CD4-positive, alpha-beta memory T cell (primary cell): ENCODE measurements at regions of chr12 and their contacts with region 1.

Region 1: GRCh38 chr12:53231826-53232645 is at the start of gene RARG:
- DNase-seq: peak; percentile 64 to 83 (median 67)
- H3K4me3 ChIP-seq: peak within 1 kb of the TSS; percentile 63 to 90
- H3K4me3 Mint-ChIP-seq: peak within 1 kb of the TSS; percentile 87 to 98 (median 93)
- H3K27ac ChIP-seq: peak within 1 kb of the TSS; percentile 71
- H3K27ac Mint-ChIP-seq: peak within 1 kb of the TSS; percentile 89 to 98 (median 95)
- H3K4me1 ChIP-seq: peaks cover 92% of the 10 kb centered on the region
- H3K4me1 Mint-ChIP-seq: peaks cover 55 to 89% (median 74%) of the 10 kb centered on the region in 4 donors
- H3K27me3 ChIP-seq: no peaks in the 10 kb centered on the region
- H3K27me3 Mint-ChIP-seq: no peaks in the 10 kb centered on the region
- total RNA-seq, gene RARG: 84.7 to 86.0 TPM

Region 2: DNA sequence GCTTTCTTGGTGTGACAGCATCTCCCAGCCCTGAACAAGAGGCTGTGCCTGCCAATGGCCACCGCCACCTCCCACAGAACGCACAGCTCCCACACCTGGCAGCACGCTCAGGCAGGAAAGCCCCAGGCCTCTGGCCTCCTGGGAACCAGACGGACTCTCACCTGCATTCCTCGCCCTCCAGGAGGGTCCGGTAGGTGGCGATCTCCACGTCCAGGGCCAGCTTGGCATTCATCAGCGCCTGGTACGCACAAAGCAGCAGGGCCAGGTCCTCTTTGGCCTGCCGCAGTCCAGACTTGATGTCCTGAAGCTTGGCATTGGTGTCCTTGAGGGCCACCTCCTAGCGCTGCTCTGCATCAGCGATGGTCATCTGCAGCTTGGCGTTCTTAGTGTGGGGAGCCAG is 516.6 kb before region 1 on chr12:
- CTCF ChIA-PET with region 1: no interaction called
- POLR2A ChIA-PET with region 1: no interaction called
- intact Hi-C with region 1: no loop called
- DNase-seq: no peak
- H3K4me3 ChIP-seq: no peak overlapping the region
- H3K4me3 Mint-ChIP-seq: peak overlapping the region in 2 of 8 donors; percentile 46 to 66
- H3K27ac ChIP-seq: no peak overlapping the region
- H3K27ac Mint-ChIP-seq: no peak overlapping the region
- H3K4me1 ChIP-seq: peaks cover 7% of the 10 kb centered on the region
- H3K4me1 Mint-ChIP-seq: peaks cover 3 to 14% (median 9%) of the 10 kb centered on the region in 4 donors
- H3K27me3 ChIP-seq: peaks cover 26% of the 10 kb centered on the region
- H3K27me3 Mint-ChIP-seq: peaks cover 30 to 34% of the 10 kb centered on the region in 2 donors

Region 3: GRCh38 chr12:53267999-53268647 is 36.1 kb after region 1 on chr12 and contains the start of gene ESPL1:
- CTCF ChIA-PET with region 1: interaction called, 3 read pairs
- POLR2A ChIA-PET with region 1: interaction called, 13 read pairs
- intact Hi-C with region 1: no loop called
- DNase-seq: peak; percentile 78 to 82 (median 81)
- H3K4me3 ChIP-seq: peak within 1 kb of the TSS; percentile 76 to 91
- H3K4me3 Mint-ChIP-seq: peak within 1 kb of the TSS; percentile 93 to 100 (median 96)
- H3K27ac ChIP-seq: peak within 1 kb of the TSS; percentile 71
- H3K27ac Mint-ChIP-seq: peak within 1 kb of the TSS; percentile 92 to 97 (median 95)
- H3K4me1 ChIP-seq: peaks cover 10% of the 10 kb centered on the region
- H3K4me1 Mint-ChIP-seq: peaks cover 11 to 29% (median 19%) of the 10 kb centered on the region in 4 donors
- H3K27me3 ChIP-seq: no peaks in the 10 kb centered on the region
- H3K27me3 Mint-ChIP-seq: no peaks in the 10 kb centered on the region
- total RNA-seq, gene ESPL1: 0.20 to 0.55 TPM

Region 4: DNA sequence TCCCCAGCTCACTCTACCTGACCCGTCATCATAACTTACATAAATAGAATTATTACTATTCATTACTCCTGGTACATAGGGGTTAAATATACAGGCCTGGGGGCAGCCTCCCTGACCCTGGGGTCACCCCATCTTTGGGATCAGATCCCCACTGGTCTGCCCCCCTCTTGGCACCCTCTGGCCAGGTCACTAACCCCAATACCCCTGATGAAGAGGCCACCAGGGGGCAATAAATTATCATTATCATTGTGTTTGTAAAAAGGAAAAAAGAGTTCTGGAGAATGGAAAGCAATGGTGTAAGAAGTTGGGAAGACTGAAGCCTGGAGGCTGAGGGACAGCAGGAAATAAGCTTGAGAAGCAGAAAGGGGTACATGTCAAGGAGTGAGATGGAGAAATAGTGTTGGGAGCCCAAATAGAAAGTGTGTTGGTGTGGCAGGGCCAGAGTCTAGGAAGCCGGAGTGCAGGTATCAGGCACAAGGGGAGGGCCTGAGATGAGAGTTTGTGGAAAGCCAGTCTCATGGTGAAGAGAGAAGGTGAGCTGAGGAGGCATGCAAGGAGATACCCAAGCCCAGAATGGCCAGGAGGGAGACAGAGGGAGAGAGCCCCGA is 95.5 kb after region 1 on chr12:
- CTCF ChIA-PET with region 1: no interaction called
- POLR2A ChIA-PET with region 1: no interaction called
- intact Hi-C with region 1: no loop called
- DNase-seq: no peak
- H3K4me3 ChIP-seq: no peak overlapping the region
- H3K4me3 Mint-ChIP-seq: peak overlapping the region in 4 of 8 donors; percentile 12 to 87 (median 43)
- H3K27ac ChIP-seq: no peak overlapping the region
- H3K27ac Mint-ChIP-seq: peak overlapping the region in 2 of 7 donors; percentile 23 to 72
- H3K4me1 ChIP-seq: peaks cover 23% of the 10 kb centered on the region
- H3K4me1 Mint-ChIP-seq: peaks cover 7 to 28% (median 14%) of the 10 kb centered on the region in 4 donors
- H3K27me3 ChIP-seq: no peaks in the 10 kb centered on the region
- H3K27me3 Mint-ChIP-seq: peaks cover 3 to 13% of the 10 kb centered on the region in 2 donors

Region 5: DNA sequence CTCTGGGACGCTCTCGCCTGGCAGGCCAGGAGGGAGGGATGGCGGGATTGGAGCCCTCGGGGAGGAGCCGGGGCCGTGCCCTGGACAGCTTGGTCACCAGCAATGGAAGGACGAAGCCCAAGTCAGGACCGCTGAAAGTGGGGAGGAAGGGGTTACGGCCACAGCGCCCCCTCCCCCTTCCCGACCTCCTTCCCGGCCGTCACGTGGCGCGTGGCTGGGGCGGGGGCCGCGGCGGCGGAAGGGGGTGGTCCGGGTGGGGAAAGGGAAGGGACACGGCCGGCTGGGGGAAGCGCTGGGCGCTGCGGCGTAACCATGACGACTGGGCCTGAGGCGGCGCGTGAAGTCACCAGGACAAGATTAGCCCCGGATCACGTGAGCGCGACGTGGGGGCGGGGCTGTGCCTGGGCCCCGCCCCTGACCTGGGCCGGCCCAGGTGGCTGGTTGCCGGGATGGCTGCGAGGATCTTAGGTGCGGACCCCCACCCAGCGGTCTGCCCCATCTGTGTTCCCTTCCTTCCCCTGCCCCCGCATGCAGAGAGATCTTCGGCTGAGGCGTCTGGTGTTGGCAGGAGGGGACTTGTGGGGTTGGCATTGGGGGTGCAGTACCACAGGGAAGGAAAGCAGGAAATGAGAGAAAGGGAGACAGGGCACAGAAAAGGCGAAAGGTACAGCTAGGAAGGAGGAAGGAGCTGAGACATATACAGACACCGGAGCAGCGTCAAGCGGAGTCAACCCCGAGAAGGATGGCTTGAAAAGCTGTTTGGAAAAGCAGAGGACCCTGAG is 261.0 kb after region 1 on chr12:
- CTCF ChIA-PET with region 1: no interaction called
- POLR2A ChIA-PET with region 1: no interaction called
- intact Hi-C with region 1: no loop called
- DNase-seq: peak; percentile 82 to 91 (median 83)
- H3K4me3 ChIP-seq: peak overlapping the region; percentile 45 to 93
- H3K4me3 Mint-ChIP-seq: peak overlapping the region; percentile 88 to 98 (median 90)
- H3K27ac ChIP-seq: peak overlapping the region; percentile 75
- H3K27ac Mint-ChIP-seq: peak overlapping the region; percentile 86 to 99 (median 96)
- H3K4me1 ChIP-seq: peaks cover 26% of the 10 kb centered on the region
- H3K4me1 Mint-ChIP-seq: peaks cover 15 to 56% (median 39%) of the 10 kb centered on the region in 4 donors
- H3K27me3 ChIP-seq: no peaks in the 10 kb centered on the region
- H3K27me3 Mint-ChIP-seq: no peaks in the 10 kb centered on the region